ENCODE measurements at regions of chr17 and their contacts with region 1.

Region 1: DNA sequence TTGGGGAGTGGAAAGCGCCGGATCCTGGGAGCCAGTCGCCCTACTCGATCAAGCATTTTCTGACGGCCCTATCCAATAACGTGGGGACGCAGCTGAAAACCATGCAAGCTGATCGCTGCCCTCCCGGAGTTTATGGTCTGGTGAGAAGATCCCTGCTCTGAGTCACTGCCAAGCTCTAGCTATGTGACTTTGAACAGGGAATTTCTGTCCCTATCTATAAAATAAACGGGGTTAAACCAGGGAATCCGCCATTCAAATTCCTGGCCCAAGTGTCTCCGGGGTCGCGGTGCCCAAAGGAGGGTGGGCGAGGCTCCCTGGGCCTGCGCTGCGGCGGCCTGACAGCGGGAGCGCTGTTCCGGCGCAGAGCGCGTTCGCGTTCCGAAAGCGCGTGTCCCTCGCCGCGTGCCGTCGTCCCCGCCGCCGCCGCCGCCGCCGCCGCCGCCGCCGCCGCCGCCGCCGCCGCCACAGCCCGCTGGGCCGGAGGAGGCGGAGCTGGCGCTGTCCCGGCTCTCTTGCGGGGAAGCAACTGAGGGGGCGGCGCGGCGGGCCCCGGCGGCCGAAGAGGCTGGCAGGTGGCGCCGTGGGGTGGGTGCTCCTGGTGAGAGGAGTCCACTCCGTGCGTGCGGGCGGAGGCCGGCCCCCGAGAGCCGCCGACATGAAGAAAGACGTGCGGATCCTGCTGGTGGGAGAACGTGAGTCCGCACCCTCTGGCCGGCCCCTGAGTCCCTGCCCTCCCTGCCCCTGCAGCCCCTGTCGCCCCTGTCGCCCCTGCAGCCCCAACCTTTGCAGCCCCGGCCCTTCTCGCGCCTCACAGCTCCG is at the start of gene RHOT1:
- DNase-seq: peak; percentile 75 to 84
- H3K4me3 ChIP-seq: peak within 1 kb of the TSS; percentile 98
- H3K27ac ChIP-seq: peak within 1 kb of the TSS; percentile 78
- H3K4me1 ChIP-seq: peaks cover 10% of the 10 kb centered on the region; the same call in 1 of the 2 replicates
- H3K27me3 ChIP-seq: no peaks in the 10 kb centered on the region
- CTCF ChIP-seq: 0 out of 2 replicates have a peak, but pooled peaks have one; percentile 35
- total RNA-seq, gene RHOT1: 20.4 and 28.3 TPM in 2 replicates

Region 2: GRCh38 chr17:32006957-32007462 is 135.2 kb before region 1 on chr17 and contains the start of gene LRRC37B:
- CTCF ChIA-PET with region 1: interaction called, 6 read pairs
- POLR2A ChIA-PET with region 1: interaction called, 3 read pairs
- intact Hi-C with region 1: loop called (anchors 2 kb)
- DNase-seq: peak; percentile 54 to 82
- H3K4me3 ChIP-seq: peak within 1 kb of the TSS; percentile 86
- H3K27ac ChIP-seq: no peak within 1 kb of the TSS
- H3K4me1 ChIP-seq: peaks cover 9% of the 10 kb centered on the region; the same call in 1 of the 2 replicates
- H3K27me3 ChIP-seq: no peaks in the 10 kb centered on the region
- CTCF ChIP-seq: peak; percentile 89
- total RNA-seq, gene LRRC37B: 13.8 and 15.8 TPM in 2 replicates

Region 3: DNA sequence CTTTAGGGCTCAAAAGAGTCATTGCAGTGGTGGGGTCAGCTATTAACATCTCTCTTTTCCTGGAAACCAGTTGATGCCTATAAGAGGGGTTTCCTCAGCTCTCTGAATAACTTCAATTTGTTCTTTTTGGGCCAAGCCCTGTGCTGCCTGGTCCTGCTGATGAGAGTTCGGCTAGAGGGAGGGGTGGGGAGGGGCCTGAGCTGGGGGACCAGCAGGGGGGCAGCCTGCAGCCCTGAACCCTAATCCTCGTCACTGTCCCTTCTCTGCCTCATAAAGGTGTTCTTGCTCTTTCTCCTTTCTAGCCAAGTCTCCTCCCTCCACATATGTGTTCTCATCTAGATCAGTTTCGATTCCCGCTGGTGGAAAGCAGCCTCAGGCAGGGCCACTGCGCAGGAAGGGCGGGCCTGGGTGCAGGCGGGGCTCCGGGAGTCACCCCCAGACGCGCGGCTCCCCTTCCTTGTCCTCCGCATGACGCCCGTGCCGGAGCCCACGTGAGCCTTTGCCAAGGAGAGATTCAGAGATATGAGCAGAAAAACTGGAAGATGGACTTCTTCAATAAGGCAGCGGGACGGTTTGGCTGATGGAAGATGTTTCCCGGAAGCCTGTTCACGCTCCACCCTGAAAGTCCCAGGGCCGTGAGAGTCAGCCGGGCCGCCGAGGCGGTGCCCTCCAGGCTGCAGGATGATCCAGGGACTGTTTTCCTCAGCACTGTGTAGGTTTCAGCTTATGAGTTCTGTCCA is 14.9 kb before region 1 on chr17:
- CTCF ChIA-PET with region 1: no interaction called
- POLR2A ChIA-PET with region 1: no interaction called
- intact Hi-C with region 1: no loop called
- DNase-seq: peak; percentile 60 to 81
- H3K4me3 ChIP-seq: peak overlapping the region; percentile 67
- H3K27ac ChIP-seq: peak overlapping the region; percentile 16; the same call in 1 of the 2 replicates
- H3K4me1 ChIP-seq: peaks cover 10% of the 10 kb centered on the region; the same call in 1 of the 2 replicates
- H3K27me3 ChIP-seq: no peaks in the 10 kb centered on the region
- CTCF ChIP-seq: no peak

Region 4: GRCh38 chr17:32157224-32157623 is 15.0 kb after region 1 on chr17:
- CTCF ChIA-PET with region 1: no interaction called
- POLR2A ChIA-PET with region 1: no interaction called
- intact Hi-C with region 1: no loop called
- DNase-seq: peak in 1 of 2 experiments; percentile 76
- H3K4me3 ChIP-seq: no peak overlapping the region
- H3K27ac ChIP-seq: no peak overlapping the region
- H3K4me1 ChIP-seq: peaks cover 7% of the 10 kb centered on the region; the same call in 1 of the 2 replicates
- H3K27me3 ChIP-seq: no peaks in the 10 kb centered on the region
- CTCF ChIP-seq: no peak

Measured in PC-9 (cell line).